ENCODE measurements at regions of chr1 and their contacts with region 1.

Region 1: DNA sequence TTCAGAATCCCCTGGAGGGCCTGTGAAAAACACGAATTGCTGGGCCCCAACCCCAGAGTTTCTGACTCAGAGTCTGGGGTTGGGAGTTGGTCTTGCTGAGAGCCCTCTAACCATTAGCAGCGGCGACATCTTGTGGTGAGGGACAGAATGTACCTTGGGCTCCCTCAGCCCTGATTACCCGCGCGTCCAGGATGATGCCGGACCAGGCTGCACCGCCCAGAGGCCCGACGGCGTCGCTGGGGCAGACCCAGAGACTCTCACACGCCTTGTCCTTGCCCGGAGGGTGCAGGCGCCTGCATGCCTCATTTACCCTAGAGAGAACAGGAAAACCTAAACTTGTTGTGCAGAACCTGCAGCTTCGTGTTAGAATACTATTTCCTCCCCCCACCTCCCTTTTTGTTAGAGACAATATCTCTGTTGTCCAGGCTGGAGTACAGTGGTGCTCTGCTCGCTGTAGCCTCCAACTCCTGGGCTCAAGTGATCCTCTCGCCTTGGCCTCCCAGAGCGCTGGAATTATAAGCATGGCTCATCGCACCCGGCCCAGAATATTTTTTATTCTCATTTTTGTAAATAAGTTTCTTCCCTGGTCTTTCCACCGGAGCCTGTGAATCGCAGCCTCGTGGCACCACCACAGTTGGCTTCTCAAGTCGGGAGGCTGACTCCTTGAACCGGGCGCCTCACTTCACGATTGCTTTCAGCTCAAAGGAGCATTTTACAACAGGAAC is 22.2 kb upstream of the RD3 start:
- DNase-seq: peak; percentile 84 to 87 (median 86)
- ATAC-seq: peak; percentile 79
- H3K4me3 ChIP-seq: no peak overlapping the region
- H3K27ac ChIP-seq: peak overlapping the region in 3 of 4 donors; percentile 76 to 84 (median 79)
- H3K4me1 ChIP-seq: peaks cover 26% of the 10 kb centered on the region
- H3K27me3 ChIP-seq: no peaks in the 10 kb centered on the region
- CTCF ChIP-seq: peak; percentile 46 to 86 (median 78)
- POLR2A ChIP-seq: no peak

Region 2: GRCh38 chr1:211323156-211324063 is 190.8 kb before region 1 on chr1:
- intact Hi-C with region 1: loop called (anchors 10 kb)
- DNase-seq: peak; percentile 62 to 75 (median 70)
- ATAC-seq: peak; percentile 30
- H3K4me3 ChIP-seq: no peak overlapping the region
- H3K27ac ChIP-seq: no peak overlapping the region
- H3K4me1 ChIP-seq: peaks cover 18% of the 10 kb centered on the region
- H3K27me3 ChIP-seq: no peaks in the 10 kb centered on the region
- CTCF ChIP-seq: peak; percentile 41 to 79 (median 74)
- POLR2A ChIP-seq: no peak

Region 3: DNA sequence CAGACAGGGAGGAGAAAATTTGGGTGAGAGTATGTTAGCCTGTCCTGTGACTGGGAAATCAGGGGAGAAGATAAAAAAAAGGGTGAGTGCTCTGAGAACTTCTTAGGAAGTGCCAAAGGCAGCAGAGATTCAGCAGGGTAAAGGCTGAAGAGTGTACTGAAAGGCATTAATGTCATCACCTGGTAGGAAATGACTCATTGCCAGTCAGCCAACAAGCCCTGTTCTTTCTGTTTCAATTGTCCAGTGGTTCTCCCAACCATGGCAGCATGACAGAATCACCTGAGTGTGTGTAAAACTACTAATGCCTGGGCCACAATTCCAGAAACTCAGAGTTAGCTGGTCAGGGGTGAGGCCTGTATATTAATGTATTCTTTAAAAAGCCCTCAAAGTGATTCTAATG is 437.7 kb after region 1 on chr1:
- intact Hi-C with region 1: no loop called
- DNase-seq: no peak
- ATAC-seq: no peak
- H3K4me3 ChIP-seq: no peak overlapping the region
- H3K27ac ChIP-seq: no peak overlapping the region
- H3K4me1 ChIP-seq: peaks cover 4% of the 10 kb centered on the region
- H3K27me3 ChIP-seq: no peaks in the 10 kb centered on the region
- CTCF ChIP-seq: no peak
- POLR2A ChIP-seq: no peak

Measured in body of pancreas (tissue), 4 donors.